Mammary epithelial cell (primary cell): ENCODE measurements at regions of chr11 and their contacts with region 1.

Region 1: GRCh38 chr11:69145062-69145405 is 10.7 kb upstream of the SMIM38 start:
- DNase-seq: no peak
- H3K4me3 ChIP-seq: no peak overlapping the region
- H3K27ac ChIP-seq: no peak overlapping the region
- H3K4me1 ChIP-seq: peaks cover 3% of the 10 kb centered on the region
- H3K27me3 ChIP-seq: no peaks in the 10 kb centered on the region
- CTCF ChIP-seq: no peak

Region 2: GRCh38 chr11:69427337-69427736 is 282.3 kb after region 1 on chr11:
- CTCF ChIA-PET with region 1: no interaction called
- dilution Hi-C with region 1: loop called (anchors 10 kb)
- in situ Hi-C with region 1: no loop called
- intact Hi-C with region 1: no loop called
- DNase-seq: no peak
- H3K4me3 ChIP-seq: no peak overlapping the region
- H3K27ac ChIP-seq: no peak overlapping the region
- H3K4me1 ChIP-seq: peaks cover 1% of the 10 kb centered on the region
- H3K27me3 ChIP-seq: no peaks in the 10 kb centered on the region
- CTCF ChIP-seq: no peak